Colonic mucosa (tissue), 4 donors: ENCODE measurements at regions of chr20 and their contacts with region 1.

Region 1: GRCh38 chr20:53939572-53940359 is 130.6 kb downstream of the BCAS1 start:
- DNase-seq: peak; percentile 97
- H3K4me3 ChIP-seq: no peak overlapping the region
- H3K27ac ChIP-seq: peak overlapping the region; percentile 73
- H3K4me1 ChIP-seq: peaks cover 16% of the 10 kb centered on the region
- H3K27me3 ChIP-seq: no peaks in the 10 kb centered on the region
- CTCF ChIP-seq: peak; percentile 66

Region 2: DNA sequence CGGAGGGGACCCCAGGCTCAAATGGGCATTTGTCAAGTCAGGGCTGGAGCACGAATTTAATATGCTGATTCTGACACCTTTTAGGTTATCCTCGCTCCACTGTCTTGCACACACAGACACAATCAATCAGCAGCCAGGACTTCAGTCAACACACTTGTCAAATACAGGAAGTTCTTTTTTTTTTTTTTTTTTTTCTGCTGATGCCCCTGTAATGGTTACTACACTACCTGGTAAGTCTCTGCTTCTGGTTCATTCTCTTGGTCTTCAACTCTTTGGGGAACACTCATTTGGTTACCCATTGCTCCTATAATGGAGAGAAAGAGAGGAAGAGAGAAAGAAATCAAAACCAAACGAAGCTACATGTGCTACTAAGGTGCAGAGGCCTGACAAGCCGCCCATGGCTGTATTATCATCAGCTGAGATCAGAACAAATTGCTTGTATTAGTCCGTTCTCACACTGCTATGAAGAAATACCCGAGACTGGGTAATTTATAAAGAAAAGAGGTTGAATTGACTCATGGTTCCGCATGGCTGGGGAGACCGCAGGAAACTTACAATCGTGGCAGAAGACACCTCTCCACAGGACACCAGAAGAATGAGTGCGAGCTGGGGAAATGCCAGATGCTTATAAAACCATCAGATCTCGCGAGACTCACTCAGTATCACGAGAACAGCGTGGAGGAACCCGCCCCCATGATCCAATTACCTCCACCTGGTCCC is 118.8 kb after region 1 on chr20:
- intact Hi-C with region 1: loop called (anchors 5 kb)
- DNase-seq: no peak
- H3K4me3 ChIP-seq: no peak overlapping the region
- H3K27ac ChIP-seq: no peak overlapping the region
- H3K4me1 ChIP-seq: no peaks in the 10 kb centered on the region
- H3K27me3 ChIP-seq: no peaks in the 10 kb centered on the region
- CTCF ChIP-seq: no peak